Lower leg skin (tissue), 4 donors: ENCODE measurements at regions of chr15 and their contacts with region 1.

Region 1: DNA sequence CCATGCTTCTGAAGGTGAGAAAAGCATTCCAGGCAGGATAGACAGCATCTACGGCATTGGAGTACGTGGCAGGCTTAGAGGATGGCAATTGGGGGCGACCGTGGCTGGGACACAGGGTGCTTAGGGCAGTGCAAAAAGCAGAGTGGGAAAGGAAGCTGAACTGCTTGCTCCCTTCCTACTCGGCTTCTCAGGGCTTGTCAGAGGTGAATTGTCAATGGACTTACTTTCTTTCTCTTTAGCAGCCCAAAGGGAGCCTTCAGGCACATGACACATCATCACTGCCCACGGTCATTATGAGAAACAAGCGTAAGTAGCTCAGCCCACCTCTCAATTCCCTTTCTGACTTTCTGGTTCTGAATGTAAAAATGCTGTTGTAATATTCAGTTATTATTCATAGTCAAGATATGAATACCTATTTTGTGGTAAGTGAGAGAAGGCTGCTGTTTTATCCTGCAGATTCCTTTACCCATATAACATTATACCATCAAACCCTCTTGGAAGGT is 84.3 kb downstream of the KLHL25 start:
- DNase-seq: no peak
- H3K4me3 ChIP-seq: no peak overlapping the region
- CTCF ChIP-seq: no peak
- POLR2A ChIP-seq: no peak

Region 2: DNA sequence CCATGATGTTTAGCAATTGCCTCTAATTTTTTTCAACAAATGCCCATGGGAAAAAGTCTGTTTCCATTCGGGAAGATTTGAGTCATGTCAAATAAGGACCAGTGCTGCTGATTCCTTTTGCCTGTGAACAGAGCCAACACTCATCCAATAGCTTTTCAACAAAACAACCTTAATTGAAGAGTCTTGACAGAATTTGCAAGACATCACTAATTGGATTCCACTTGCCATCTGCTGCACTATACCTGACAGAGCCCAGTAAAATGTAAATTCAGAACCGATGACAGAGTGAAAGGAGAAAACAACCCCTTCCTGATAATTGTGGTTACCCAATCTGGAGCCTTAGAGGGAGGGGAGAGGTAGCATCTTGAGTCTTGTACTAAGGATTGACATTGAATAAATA is 796.0 kb after region 1 on chr15:
- intact Hi-C with region 1: loop called (anchors 5 kb)
- DNase-seq: no peak
- H3K4me3 ChIP-seq: no peak overlapping the region
- CTCF ChIP-seq: no peak
- POLR2A ChIP-seq: no peak